CD4-positive, alpha-beta memory T cell (primary cell): ENCODE measurements at regions of chr14 and their contacts with region 1.

Region 1: DNA sequence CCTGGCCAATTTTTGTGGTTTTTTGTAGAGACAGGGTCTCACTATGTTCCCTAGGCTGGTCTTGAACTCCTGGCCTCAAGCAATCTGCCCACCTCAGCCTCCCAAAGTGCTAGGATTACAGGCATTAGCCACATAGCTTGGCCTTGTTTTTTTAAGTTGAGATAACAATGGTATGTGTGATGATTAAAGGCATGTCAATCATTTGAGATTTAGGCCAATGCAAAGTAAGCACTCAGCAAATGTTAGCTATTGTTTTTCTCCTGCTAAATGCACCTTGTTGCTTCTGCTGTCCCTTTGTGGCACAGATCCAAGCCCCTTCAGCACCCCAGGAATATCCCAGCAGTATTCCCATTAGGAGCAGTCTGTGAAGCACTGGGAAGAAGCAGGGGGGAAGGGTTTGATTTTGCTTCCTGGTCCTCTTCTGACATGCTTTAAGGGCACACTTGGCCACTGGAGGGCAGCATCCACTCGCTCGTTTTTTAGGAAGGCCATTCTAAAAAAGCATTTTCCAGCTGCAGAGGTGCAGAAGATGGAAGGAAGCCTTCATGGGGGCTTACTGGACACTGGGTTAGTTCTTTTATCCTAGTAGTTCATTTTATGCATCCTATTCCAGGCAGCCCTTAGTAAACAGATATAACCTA is 70.2 kb upstream of the ZFP36L1 start:
- DNase-seq: peak; percentile 43 to 59 (median 53)
- H3K4me3 ChIP-seq: no peak overlapping the region
- H3K4me3 Mint-ChIP-seq: no peak overlapping the region
- H3K27ac ChIP-seq: no peak overlapping the region
- H3K27ac Mint-ChIP-seq: peak overlapping the region in 1 of 7 donors; percentile 35
- H3K4me1 ChIP-seq: no peaks in the 10 kb centered on the region
- H3K4me1 Mint-ChIP-seq: no peaks in the 10 kb centered on the region
- H3K27me3 ChIP-seq: no peaks in the 10 kb centered on the region
- H3K27me3 Mint-ChIP-seq: no peaks in the 10 kb centered on the region

Region 2: GRCh38 chr14:69090187-69090789 is 227.2 kb after region 1 on chr14:
- CTCF ChIA-PET with region 1: interaction called, 12 read pairs
- POLR2A ChIA-PET with region 1: no interaction called
- intact Hi-C with region 1: loop called (anchors 1 kb)
- DNase-seq: peak in 4 of 5 donors; percentile 22 to 32 (median 27)
- H3K4me3 ChIP-seq: no peak overlapping the region
- H3K4me3 Mint-ChIP-seq: no peak overlapping the region
- H3K27ac ChIP-seq: no peak overlapping the region
- H3K27ac Mint-ChIP-seq: no peak overlapping the region
- H3K4me1 ChIP-seq: no peaks in the 10 kb centered on the region
- H3K4me1 Mint-ChIP-seq: peaks cover 4 to 10% (median 6%) of the 10 kb centered on the region in 4 donors
- H3K27me3 ChIP-seq: no peaks in the 10 kb centered on the region
- H3K27me3 Mint-ChIP-seq: no peaks in the 10 kb centered on the region

Region 3: DNA sequence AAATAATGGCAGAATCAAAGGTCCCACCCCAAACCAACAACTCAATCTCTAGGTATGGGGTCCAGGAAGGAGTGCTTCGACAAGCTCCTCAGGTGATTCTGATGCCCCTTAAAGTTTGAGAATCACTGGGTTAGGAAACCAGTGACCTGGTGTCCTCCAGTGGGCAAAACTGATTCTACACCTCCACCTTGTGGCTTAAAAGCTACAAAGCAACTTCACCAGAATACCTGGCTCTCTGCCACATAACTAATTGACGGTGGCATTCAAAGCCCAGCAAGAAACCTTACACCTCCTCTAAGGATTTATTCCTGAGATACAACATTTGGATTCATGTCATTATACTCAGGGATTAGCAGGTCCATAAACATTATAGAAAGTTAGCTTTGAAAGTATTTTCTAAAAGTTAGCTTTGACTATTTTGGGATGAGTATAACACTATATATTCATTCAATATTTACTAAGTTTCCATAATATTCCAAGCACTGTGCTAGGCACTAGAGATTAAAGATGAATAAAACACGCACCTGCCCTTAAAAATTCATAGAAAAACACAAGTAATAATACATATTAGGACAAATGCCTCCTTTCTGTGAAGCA is 244.4 kb after region 1 on chr14:
- CTCF ChIA-PET with region 1: interaction called, 25 read pairs
- POLR2A ChIA-PET with region 1: interaction called, 3 read pairs
- intact Hi-C with region 1: loop called (anchors 1 kb)
- DNase-seq: peak in 4 of 5 donors; percentile 40 to 51 (median 47)
- H3K4me3 ChIP-seq: no peak overlapping the region
- H3K4me3 Mint-ChIP-seq: no peak overlapping the region
- H3K27ac ChIP-seq: no peak overlapping the region
- H3K27ac Mint-ChIP-seq: no peak overlapping the region
- H3K4me1 ChIP-seq: no peaks in the 10 kb centered on the region
- H3K4me1 Mint-ChIP-seq: peaks cover 0 to 5% (median 2%) of the 10 kb centered on the region in 4 donors
- H3K27me3 ChIP-seq: no peaks in the 10 kb centered on the region
- H3K27me3 Mint-ChIP-seq: no peaks in the 10 kb centered on the region

Region 4: DNA sequence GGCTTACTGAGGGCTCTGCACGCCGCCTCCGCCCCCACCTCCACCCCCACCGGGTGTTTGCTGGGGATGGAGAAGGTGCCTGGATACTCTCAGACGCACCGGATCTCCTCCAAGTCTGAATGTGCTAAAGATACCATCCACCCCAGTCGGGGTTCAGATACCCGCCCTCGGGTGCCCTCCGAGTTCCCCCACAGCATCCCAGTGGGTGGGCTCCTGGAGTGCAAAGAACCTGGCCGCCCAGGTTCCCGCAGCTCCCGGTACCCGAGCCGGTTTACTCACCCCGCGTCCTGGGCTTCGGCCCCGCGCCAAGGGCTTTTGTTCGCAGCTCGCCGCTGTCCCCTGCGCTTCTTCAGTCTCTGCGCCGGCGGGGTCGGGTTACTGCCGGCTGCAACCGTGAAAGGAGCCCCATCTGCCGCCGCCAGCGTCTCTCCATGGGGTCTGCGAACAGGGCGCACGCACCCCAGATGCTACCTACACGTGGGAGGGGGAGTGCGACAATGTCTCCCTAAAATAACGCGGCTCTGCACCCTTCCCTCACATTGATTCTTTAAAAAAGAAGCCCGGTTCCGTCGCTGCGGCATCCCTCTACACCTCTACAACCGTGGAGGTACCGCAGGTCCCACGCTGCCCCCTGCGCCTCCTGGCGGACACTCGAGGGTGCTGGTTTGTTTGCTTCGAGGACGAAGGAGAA is 711.3 kb after region 1 on chr14 and contains the start of gene CCDC177:
- CTCF ChIA-PET with region 1: no interaction called
- POLR2A ChIA-PET with region 1: no interaction called
- intact Hi-C with region 1: loop called (anchors 2 kb)
- DNase-seq: peak; percentile 63 to 73 (median 65)
- H3K4me3 ChIP-seq: peak within 1 kb of the TSS in 1 of 2 donors; percentile 48
- H3K4me3 Mint-ChIP-seq: peak within 1 kb of the TSS; percentile 83 to 95 (median 90)
- H3K27ac ChIP-seq: no peak within 1 kb of the TSS
- H3K27ac Mint-ChIP-seq: peak within 1 kb of the TSS in 1 of 7 donors; percentile 61
- H3K4me1 ChIP-seq: peaks cover 13% of the 10 kb centered on the region
- H3K4me1 Mint-ChIP-seq: peaks cover 6 to 29% (median 11%) of the 10 kb centered on the region in 4 donors
- H3K27me3 ChIP-seq: peaks cover 23% of the 10 kb centered on the region
- H3K27me3 Mint-ChIP-seq: peaks cover 36% of the 10 kb centered on the region in 2 donors
- total RNA-seq, gene CCDC177: not detected